CD8-positive, alpha-beta T cell (primary cell): ENCODE measurements at regions of chr6 and their contacts with region 1.

Region 1: DNA sequence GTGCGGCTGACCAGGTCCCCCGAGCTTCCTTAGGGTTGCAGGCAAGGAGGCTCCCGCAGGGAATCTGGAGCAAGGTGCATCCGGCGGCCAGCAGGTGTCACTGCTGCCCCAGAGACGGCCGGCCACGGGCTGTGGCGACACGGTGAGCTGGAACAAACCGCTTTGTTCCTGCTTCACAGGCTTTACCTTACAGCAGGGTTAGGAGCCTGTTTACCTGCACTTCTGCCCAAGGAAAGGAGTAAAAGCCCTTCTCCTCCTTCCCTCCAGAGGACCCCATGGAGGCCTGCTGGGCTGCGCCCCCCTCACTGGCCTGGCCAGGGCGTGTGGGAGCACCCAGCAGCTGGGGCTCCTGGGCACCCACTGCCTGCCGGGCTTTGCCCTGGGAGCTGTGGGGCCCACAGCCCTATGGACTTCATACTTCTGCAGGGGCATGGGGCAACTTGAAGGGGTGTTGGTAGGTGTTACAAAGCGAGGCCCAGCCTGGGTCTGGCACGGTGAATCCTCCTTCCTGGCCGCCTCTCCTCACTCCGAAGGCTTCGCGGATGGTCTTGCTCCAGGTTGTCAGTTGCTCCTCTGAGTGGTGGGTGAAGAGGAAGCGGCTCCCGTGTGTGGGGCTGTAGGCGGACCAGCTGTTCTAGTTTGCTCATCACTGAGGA is 88.4 kb downstream of the CDC5L start:
- DNase-seq: peak; percentile 26 to 80 (median 60)
- ATAC-seq: peak; percentile 74
- H3K4me3 ChIP-seq: no peak overlapping the region
- H3K4me3 Mint-ChIP-seq: no peak overlapping the region
- H3K27ac ChIP-seq: no peak overlapping the region
- H3K27ac Mint-ChIP-seq: no peak overlapping the region
- H3K4me1 ChIP-seq: peaks cover 9% of the 10 kb centered on the region
- H3K4me1 Mint-ChIP-seq: peaks cover 2% of the 10 kb centered on the region
- H3K27me3 ChIP-seq: no peaks in the 10 kb centered on the region
- H3K27me3 Mint-ChIP-seq: no peaks in the 10 kb centered on the region
- CTCF ChIP-seq: peak; percentile 70

Region 2: GRCh38 chr6:44456070-44456965 is 19.6 kb before region 1 on chr6:
- CTCF ChIA-PET with region 1: interaction called, 19 read pairs
- POLR2A ChIA-PET with region 1: no interaction called
- intact Hi-C with region 1: no loop called
- DNase-seq: peak in 6 of 9 experiments; percentile 7 to 64 (median 36)
- ATAC-seq: peak; percentile 62
- H3K4me3 ChIP-seq: no peak overlapping the region
- H3K4me3 Mint-ChIP-seq: no peak overlapping the region
- H3K27ac ChIP-seq: no peak overlapping the region
- H3K27ac Mint-ChIP-seq: no peak overlapping the region
- H3K4me1 ChIP-seq: no peaks in the 10 kb centered on the region
- H3K4me1 Mint-ChIP-seq: no peaks in the 10 kb centered on the region
- H3K27me3 ChIP-seq: no peaks in the 10 kb centered on the region
- H3K27me3 Mint-ChIP-seq: no peaks in the 10 kb centered on the region
- CTCF ChIP-seq: peak; percentile 69

Region 3: DNA sequence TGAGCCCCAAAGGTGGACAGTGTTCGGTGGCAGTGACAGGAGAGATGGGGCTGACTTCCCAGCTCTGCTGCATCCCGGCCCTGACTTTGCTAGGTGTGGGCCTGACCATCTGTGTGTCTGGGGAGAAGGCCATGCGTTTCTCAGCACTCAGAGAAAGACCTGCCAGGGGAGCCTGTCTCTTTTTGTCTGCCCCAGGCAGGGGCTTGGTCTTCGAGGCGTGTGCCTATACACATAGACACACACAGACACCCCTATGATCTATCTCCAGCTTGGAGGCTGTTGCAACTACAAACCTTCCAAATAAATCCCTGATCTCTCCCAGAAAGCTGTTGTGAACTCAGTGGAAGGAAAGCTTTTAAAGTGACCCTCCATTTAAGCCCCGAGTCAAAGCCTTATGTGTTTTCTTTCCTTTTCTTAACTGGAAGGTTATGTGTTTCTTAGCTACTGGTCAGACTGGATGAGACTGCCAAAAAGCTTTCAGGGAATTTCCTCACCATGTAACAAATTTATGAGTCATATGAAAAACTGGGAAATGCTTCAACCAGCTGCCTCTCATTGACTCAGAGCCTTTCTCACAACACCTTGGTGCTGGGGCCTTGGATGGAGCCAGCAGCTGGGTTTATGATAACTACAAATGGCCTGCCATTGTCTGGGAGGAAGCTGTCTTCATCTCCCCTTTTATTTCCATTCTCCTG is 14.2 kb after region 1 on chr6:
- CTCF ChIA-PET with region 1: interaction called, 21 read pairs
- POLR2A ChIA-PET with region 1: no interaction called
- intact Hi-C with region 1: no loop called
- DNase-seq: no peak
- ATAC-seq: no peak
- H3K4me3 ChIP-seq: no peak overlapping the region
- H3K4me3 Mint-ChIP-seq: no peak overlapping the region
- H3K27ac ChIP-seq: no peak overlapping the region
- H3K27ac Mint-ChIP-seq: no peak overlapping the region
- H3K4me1 ChIP-seq: no peaks in the 10 kb centered on the region
- H3K4me1 Mint-ChIP-seq: no peaks in the 10 kb centered on the region
- H3K27me3 ChIP-seq: no peaks in the 10 kb centered on the region
- H3K27me3 Mint-ChIP-seq: peaks cover 13% of the 10 kb centered on the region
- CTCF ChIP-seq: no peak

Region 4: GRCh38 chr6:44655412-44656342 is 179.8 kb after region 1 on chr6:
- CTCF ChIA-PET with region 1: interaction called, 11 read pairs
- POLR2A ChIA-PET with region 1: no interaction called
- intact Hi-C with region 1: loop called (anchors 5 to 10 kb)
- DNase-seq: peak; percentile 53 to 88 (median 77)
- ATAC-seq: peak; percentile 78
- H3K4me3 ChIP-seq: no peak overlapping the region
- H3K4me3 Mint-ChIP-seq: peak overlapping the region; percentile 20
- H3K27ac ChIP-seq: no peak overlapping the region
- H3K27ac Mint-ChIP-seq: peak overlapping the region; percentile 14
- H3K4me1 ChIP-seq: peaks cover 10% of the 10 kb centered on the region
- H3K4me1 Mint-ChIP-seq: peaks cover 7% of the 10 kb centered on the region
- H3K27me3 ChIP-seq: no peaks in the 10 kb centered on the region
- H3K27me3 Mint-ChIP-seq: peaks cover 5% of the 10 kb centered on the region
- CTCF ChIP-seq: peak; percentile 93

Region 5: DNA sequence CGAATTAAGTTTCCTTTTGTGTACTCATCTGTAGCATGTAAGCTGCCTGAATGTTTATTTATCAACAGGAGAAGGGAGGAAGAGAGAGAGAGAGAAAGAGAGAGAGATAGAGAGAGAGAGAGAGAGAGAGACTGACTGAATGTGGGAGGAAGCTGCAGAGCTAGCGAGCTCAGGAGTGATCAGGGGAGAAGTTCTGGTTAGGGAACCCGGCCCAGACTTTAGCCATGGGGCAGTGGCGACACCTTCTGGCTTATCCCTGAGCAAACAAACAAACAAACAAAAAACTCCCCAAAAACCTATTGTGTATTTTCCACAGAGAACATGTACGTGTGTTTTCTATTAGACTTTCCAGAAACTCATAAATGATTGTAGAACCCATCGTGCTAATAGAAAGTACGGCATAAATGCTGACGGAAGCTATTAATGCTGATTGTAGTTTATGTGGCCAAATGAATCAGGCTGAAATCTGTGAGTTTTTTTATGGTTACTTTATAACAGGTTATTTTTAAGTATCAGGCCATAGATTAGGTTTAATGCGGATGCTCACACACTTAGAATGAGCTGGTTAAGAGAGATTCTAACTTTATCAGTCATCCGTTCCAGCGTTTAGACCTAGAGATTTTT is 1446.9 kb after region 1 on chr6:
- CTCF ChIA-PET with region 1: interaction called, 32 read pairs
- POLR2A ChIA-PET with region 1: no interaction called
- intact Hi-C with region 1: loop called (anchors 1 kb)
- DNase-seq: peak; percentile 22 to 70 (median 51)
- ATAC-seq: no peak
- H3K4me3 ChIP-seq: no peak overlapping the region
- H3K4me3 Mint-ChIP-seq: no peak overlapping the region
- H3K27ac ChIP-seq: no peak overlapping the region
- H3K27ac Mint-ChIP-seq: no peak overlapping the region
- H3K4me1 ChIP-seq: no peaks in the 10 kb centered on the region
- H3K4me1 Mint-ChIP-seq: peaks cover 4% of the 10 kb centered on the region
- H3K27me3 ChIP-seq: no peaks in the 10 kb centered on the region
- H3K27me3 Mint-ChIP-seq: no peaks in the 10 kb centered on the region
- CTCF ChIP-seq: peak; percentile 38